GM12878 (cell line): ENCODE measurements at regions of chr6 and their contacts with region 1.

Region 1: GRCh38 chr6:20126789-20127653 is 85.2 kb downstream of the MBOAT1 start:
- DNase-seq: peak; percentile 11
- ATAC-seq: peak; percentile 99
- H3K4me3 ChIP-seq: no peak overlapping the region
- H3K27ac ChIP-seq: no peak overlapping the region
- H3K4me1 ChIP-seq: no peaks in the 10 kb centered on the region
- H3K27me3 ChIP-seq: no peaks in the 10 kb centered on the region
- CTCF ChIP-seq: peak; percentile 82 to 96 (median 94)
- EP300 ChIP-seq: no peak
- POLR2A ChIP-seq: no peak
- RAD21 ChIP-seq: peak; percentile 54

Region 2: GRCh38 chr6:20102397-20103073 is 24.5 kb before region 1 on chr6:
- CTCF ChIA-PET with region 1: interaction called, 19 read pairs
- POLR2A ChIA-PET with region 1: no interaction called
- RAD21 ChIA-PET with region 1: interaction called, 3 read pairs
- SMC1A ChIA-PET with region 1: interaction called, 10 read pairs
- in situ Hi-C with region 1: no loop called
- intact Hi-C with region 1: no loop called
- DNase-seq: no peak
- ATAC-seq: no peak
- H3K4me3 ChIP-seq: no peak overlapping the region
- H3K27ac ChIP-seq: no peak overlapping the region
- H3K4me1 ChIP-seq: no peaks in the 10 kb centered on the region
- H3K27me3 ChIP-seq: no peaks in the 10 kb centered on the region
- CTCF ChIP-seq: no peak
- EP300 ChIP-seq: no peak
- POLR2A ChIP-seq: no peak
- RAD21 ChIP-seq: no peak

Region 3: DNA sequence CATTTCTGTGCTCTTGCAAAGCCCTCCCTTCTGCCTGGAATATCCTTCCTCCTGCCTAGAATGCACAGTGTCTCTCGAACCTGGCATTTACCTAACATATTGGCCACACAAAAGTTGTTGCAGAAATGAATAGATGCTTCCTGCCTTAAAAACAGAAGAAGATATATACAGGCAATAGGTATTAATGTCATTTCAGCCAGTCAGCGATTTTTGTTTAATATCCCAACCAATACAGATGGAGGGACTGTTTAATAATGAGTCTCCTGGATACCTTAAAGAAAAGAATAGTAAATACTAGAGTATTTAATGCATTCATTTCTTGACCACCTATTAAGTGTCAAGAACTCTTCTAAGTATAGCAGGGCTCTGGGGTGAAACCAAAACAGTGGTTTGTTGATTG is 14.9 kb after region 1 on chr6:
- CTCF ChIA-PET with region 1: interaction called, 25 read pairs
- POLR2A ChIA-PET with region 1: no interaction called
- RAD21 ChIA-PET with region 1: no interaction called
- SMC1A ChIA-PET with region 1: interaction called, 8 read pairs
- in situ Hi-C with region 1: no loop called
- intact Hi-C with region 1: no loop called
- DNase-seq: no peak
- ATAC-seq: no peak
- H3K4me3 ChIP-seq: no peak overlapping the region
- H3K27ac ChIP-seq: no peak overlapping the region
- H3K4me1 ChIP-seq: no peaks in the 10 kb centered on the region
- H3K27me3 ChIP-seq: no peaks in the 10 kb centered on the region
- CTCF ChIP-seq: no peak
- EP300 ChIP-seq: no peak
- POLR2A ChIP-seq: no peak
- RAD21 ChIP-seq: no peak

Region 4: GRCh38 chr6:20156824-20157223 is 29.8 kb after region 1 on chr6:
- CTCF ChIA-PET with region 1: interaction called, 13 read pairs
- POLR2A ChIA-PET with region 1: no interaction called
- RAD21 ChIA-PET with region 1: no interaction called
- SMC1A ChIA-PET with region 1: interaction called, 5 read pairs
- in situ Hi-C with region 1: no loop called
- intact Hi-C with region 1: no loop called
- DNase-seq: no peak
- ATAC-seq: no peak
- H3K4me3 ChIP-seq: no peak overlapping the region
- H3K27ac ChIP-seq: no peak overlapping the region
- H3K4me1 ChIP-seq: no peaks in the 10 kb centered on the region
- H3K27me3 ChIP-seq: no peaks in the 10 kb centered on the region
- CTCF ChIP-seq: no peak
- EP300 ChIP-seq: no peak
- POLR2A ChIP-seq: no peak
- RAD21 ChIP-seq: no peak

Region 5: GRCh38 chr6:20202324-20202658 is 75.3 kb after region 1 on chr6:
- CTCF ChIA-PET with region 1: interaction called, 11 read pairs
- POLR2A ChIA-PET with region 1: no interaction called
- RAD21 ChIA-PET with region 1: interaction called, 10 read pairs
- SMC1A ChIA-PET with region 1: interaction called, 20 read pairs
- in situ Hi-C with region 1: no loop called
- intact Hi-C with region 1: no loop called
- DNase-seq: no peak
- ATAC-seq: peak; percentile 34
- H3K4me3 ChIP-seq: 0 out of 2 replicates have a peak overlapping the region, but pooled peaks have one; percentile 24
- H3K27ac ChIP-seq: peak overlapping the region; percentile 77
- H3K4me1 ChIP-seq: peaks cover 72% of the 10 kb centered on the region
- H3K27me3 ChIP-seq: no peaks in the 10 kb centered on the region
- CTCF ChIP-seq: no peak
- EP300 ChIP-seq: no peak
- POLR2A ChIP-seq: no peak
- RAD21 ChIP-seq: no peak

Region 6: GRCh38 chr6:20227350-20227749 is 100.3 kb after region 1 on chr6:
- CTCF ChIA-PET with region 1: interaction called, 10 read pairs
- POLR2A ChIA-PET with region 1: no interaction called
- RAD21 ChIA-PET with region 1: no interaction called
- SMC1A ChIA-PET with region 1: interaction called, 4 read pairs
- in situ Hi-C with region 1: no loop called
- intact Hi-C with region 1: no loop called
- DNase-seq: no peak
- ATAC-seq: no peak
- H3K4me3 ChIP-seq: no peak overlapping the region
- H3K27ac ChIP-seq: no peak overlapping the region
- H3K4me1 ChIP-seq: no peaks in the 10 kb centered on the region
- H3K27me3 ChIP-seq: no peaks in the 10 kb centered on the region
- CTCF ChIP-seq: no peak
- EP300 ChIP-seq: no peak
- POLR2A ChIP-seq: no peak
- RAD21 ChIP-seq: no peak